ENCODE measurements at regions of chr21 and their contacts with region 1.

Region 1: DNA sequence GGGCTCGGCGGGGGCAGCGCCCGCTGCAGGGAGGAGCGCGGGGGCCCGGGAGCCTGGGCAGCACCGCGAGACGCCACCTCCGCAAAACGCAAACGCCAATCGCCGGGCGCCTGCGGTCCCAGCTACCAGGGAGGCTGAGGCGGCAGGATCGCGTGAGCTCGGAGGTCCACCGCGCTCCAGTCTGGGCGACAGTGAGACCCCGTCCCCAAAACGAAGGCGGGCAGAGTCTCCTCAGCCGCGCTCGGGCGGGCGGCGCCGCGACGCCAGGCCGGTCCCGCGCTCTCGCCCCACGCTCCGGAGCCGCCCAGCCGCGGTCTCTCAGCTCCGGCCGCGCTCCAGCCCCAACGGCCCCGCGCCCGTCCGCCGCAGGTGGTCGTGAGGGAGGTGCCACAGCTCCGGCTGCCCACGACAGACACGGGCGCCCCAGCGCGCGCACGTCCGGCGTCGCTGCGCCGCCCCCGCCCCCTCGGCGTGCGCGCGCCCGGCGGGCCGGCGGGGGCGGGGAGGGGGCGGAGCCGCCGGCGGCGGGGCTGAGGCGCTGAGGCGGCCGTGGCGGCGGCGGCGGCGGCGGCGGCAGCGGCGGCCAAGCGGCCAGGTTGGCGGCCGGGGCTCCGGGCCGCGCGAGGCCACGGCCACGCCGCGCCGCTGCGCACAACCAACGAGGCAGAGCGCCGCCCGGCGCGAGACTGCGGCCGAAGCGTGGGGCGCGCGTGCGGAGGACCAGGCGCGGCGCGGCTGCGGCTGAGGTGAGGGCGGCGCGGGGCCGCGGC is at the start of gene ADARB1:
- DNase-seq: peak; percentile 65 to 83
- ATAC-seq: peak; percentile 55 to 74 (median 73)
- H3K4me3 ChIP-seq: peak within 1 kb of the TSS; percentile 92
- H3K27ac ChIP-seq: peak within 1 kb of the TSS; percentile 93
- H3K4me1 ChIP-seq: peaks cover 38% of the 10 kb centered on the region
- H3K27me3 ChIP-seq: no peaks in the 10 kb centered on the region
- CTCF ChIP-seq: no peak
- total RNA-seq, gene ADARB1: 6.9 to 22.7 (median 14.4) TPM

Region 2: DNA sequence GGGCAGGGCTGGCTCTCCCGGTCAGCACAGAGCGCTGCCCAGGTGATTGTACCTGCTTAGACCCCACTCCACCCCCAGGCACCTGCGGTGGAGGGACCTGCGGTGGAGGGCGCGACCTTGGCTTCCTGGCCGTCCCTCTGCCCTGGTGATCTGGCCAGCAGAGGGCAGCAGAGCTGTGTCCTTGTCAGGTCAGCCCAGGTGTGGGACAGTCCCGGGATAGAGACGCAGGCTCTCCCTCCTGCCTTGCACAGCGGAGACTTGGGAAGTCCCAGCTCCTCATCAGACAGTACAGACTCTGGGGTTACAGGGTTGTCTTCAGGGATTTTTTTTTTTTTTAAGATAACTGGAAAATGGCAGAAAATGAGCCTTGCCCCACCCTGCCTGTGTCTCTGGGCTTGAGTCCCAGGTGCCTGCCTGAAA is 124.4 kb before region 1 on chr21:
- intact Hi-C with region 1: loop called (anchors 5 kb)
- DNase-seq: peak; percentile 90 to 95
- ATAC-seq: peak; percentile 45 to 63 (median 53)
- H3K4me3 ChIP-seq: no peak overlapping the region
- H3K27ac ChIP-seq: peak overlapping the region; percentile 55
- H3K4me1 ChIP-seq: peaks cover 78% of the 10 kb centered on the region
- H3K27me3 ChIP-seq: no peaks in the 10 kb centered on the region
- CTCF ChIP-seq: peak; percentile 97

Region 3: GRCh38 chr21:45050786-45051489 is 23.3 kb before region 1 on chr21:
- intact Hi-C with region 1: loop called in 1 of 2 experiments (anchors 2 kb)
- DNase-seq: no peak
- ATAC-seq: peak; percentile 36 to 49 (median 47)
- H3K4me3 ChIP-seq: no peak overlapping the region
- H3K27ac ChIP-seq: peak overlapping the region; percentile 83
- H3K4me1 ChIP-seq: peaks cover 43% of the 10 kb centered on the region
- H3K27me3 ChIP-seq: no peaks in the 10 kb centered on the region
- CTCF ChIP-seq: no peak

Region 4: DNA sequence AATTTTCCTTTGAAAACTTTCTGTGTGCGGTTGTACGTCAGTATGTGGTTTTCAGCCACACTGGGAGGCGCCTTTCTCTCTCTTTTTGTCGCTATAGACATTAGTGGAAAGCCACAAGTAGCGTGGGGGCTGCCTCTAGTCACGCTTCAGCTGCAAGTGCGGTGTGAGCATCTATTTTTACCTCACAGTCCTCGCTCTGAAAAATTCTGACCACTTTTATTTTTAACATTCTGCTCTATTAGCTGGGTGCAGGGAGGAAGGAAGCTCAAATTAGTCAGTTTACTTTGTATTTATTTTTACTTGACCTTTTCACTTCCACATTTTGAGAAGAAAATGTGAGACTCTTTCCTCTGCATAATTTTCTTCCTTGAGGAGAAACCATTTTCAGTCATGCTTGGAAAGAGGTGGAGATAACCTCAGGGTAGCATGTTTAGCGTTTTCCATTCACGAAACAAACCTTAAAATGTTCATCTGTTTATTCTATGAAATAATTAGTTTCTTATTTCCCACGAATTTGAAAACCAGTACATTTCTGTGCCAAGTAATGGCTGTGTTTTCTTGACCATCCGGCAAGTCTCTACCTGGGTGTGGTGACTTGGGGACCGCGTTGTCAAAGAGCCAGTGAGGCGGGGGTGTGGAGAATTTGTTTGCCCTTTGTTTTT is 35.7 kb after region 1 on chr21:
- intact Hi-C with region 1: loop called in 1 of 2 experiments (anchors 5 kb)
- DNase-seq: no peak
- ATAC-seq: peak in 1 of 4 donors; percentile 39
- H3K4me3 ChIP-seq: peak overlapping the region; percentile 39
- H3K27ac ChIP-seq: no peak overlapping the region
- H3K4me1 ChIP-seq: peaks cover 45% of the 10 kb centered on the region
- H3K27me3 ChIP-seq: no peaks in the 10 kb centered on the region
- CTCF ChIP-seq: no peak

Region 5: DNA sequence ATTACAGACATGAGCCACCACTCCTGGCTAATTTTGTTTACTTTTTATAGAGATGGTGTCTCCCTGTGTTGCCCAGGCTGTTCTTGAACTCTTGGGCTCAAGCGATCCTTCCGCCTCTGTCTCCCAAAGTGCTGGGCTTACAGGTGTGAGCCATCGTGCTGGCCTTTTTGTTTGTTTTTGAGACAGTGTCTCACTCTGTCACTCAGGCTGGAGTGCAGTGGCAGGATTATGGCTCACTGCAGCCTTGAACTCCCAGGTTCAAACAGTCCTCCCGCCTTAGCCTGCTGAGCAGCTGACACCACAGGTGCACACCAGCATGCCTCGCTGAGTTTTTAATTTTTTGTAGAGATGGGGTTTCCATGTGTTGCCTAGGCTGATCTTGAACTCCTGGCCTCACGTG is 49.2 kb after region 1 on chr21:
- intact Hi-C with region 1: loop called (anchors 2 to 10 kb)
- DNase-seq: no peak
- ATAC-seq: no peak
- H3K4me3 ChIP-seq: no peak overlapping the region
- H3K27ac ChIP-seq: no peak overlapping the region
- H3K4me1 ChIP-seq: peaks cover 16% of the 10 kb centered on the region
- H3K27me3 ChIP-seq: no peaks in the 10 kb centered on the region
- CTCF ChIP-seq: no peak

Region 6: GRCh38 chr21:45129189-45129923 is 55.1 kb after region 1 on chr21:
- intact Hi-C with region 1: loop called in 1 of 2 experiments (anchors 10 kb)
- DNase-seq: peak; percentile 62 to 75
- ATAC-seq: peak; percentile 63 to 66 (median 64)
- H3K4me3 ChIP-seq: peak overlapping the region; percentile 25
- H3K27ac ChIP-seq: peak overlapping the region; percentile 69
- H3K4me1 ChIP-seq: peaks cover 65% of the 10 kb centered on the region
- H3K27me3 ChIP-seq: no peaks in the 10 kb centered on the region
- CTCF ChIP-seq: no peak